Activated CD4-positive, alpha-beta T cell treated with anti-CD3 and anti-CD28 coated beads for 36 hours (primary cell): ENCODE measurements at regions of chr14 and their contacts with region 1.

Region 1: GRCh38 chr14:22664261-22664660 is 20.1 kb upstream of the OR6J1 start:
- DNase-seq: no peak
- ATAC-seq: no peak
- H3K4me3 Mint-ChIP-seq: no peak overlapping the region
- H3K27ac Mint-ChIP-seq: no peak overlapping the region
- H3K4me1 Mint-ChIP-seq: peaks cover 15% of the 10 kb centered on the region
- H3K27me3 Mint-ChIP-seq: no peaks in the 10 kb centered on the region

Region 2: GRCh38 chr14:21617614-21618013 is 1046.6 kb before region 1 on chr14:
- CTCF ChIA-PET with region 1: no interaction called
- POLR2A ChIA-PET with region 1: no interaction called
- intact Hi-C with region 1: no loop called
- DNase-seq: no peak
- ATAC-seq: no peak
- H3K4me3 Mint-ChIP-seq: no peak overlapping the region
- H3K27ac Mint-ChIP-seq: no peak overlapping the region
- H3K4me1 Mint-ChIP-seq: no peaks in the 10 kb centered on the region
- H3K27me3 Mint-ChIP-seq: peaks cover 12% of the 10 kb centered on the region

Region 3: DNA sequence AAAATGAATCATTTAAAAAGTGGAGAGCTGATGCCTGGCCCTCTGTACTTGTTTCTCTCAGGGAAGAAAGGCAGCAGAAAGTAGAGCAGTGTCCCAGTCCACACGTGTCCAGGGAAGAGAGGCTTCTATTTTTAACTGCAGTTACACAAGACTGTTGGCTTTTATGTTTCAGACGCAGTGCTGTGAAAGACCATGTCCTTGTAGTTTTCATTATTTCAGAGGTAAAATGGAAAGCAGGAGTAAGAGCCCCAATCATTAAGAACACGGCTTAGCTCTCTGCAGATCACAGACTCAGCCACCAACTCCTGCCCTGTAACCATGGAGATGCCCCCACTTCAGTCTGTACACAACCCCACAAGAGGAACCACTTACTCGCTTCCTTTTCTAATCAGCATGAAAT is 411.6 kb before region 1 on chr14:
- CTCF ChIA-PET with region 1: no interaction called
- POLR2A ChIA-PET with region 1: no interaction called
- intact Hi-C with region 1: no loop called
- DNase-seq: no peak
- ATAC-seq: no peak
- H3K4me3 Mint-ChIP-seq: no peak overlapping the region
- H3K27ac Mint-ChIP-seq: no peak overlapping the region
- H3K4me1 Mint-ChIP-seq: no peaks in the 10 kb centered on the region
- H3K27me3 Mint-ChIP-seq: no peaks in the 10 kb centered on the region

Region 4: GRCh38 chr14:22653012-22653621 is 11.1 kb before region 1 on chr14:
- CTCF ChIA-PET with region 1: interaction called, 12 read pairs
- POLR2A ChIA-PET with region 1: no interaction called
- intact Hi-C with region 1: no loop called
- DNase-seq: peak; percentile 75
- ATAC-seq: peak; percentile 80
- H3K4me3 Mint-ChIP-seq: no peak overlapping the region
- H3K27ac Mint-ChIP-seq: no peak overlapping the region
- H3K4me1 Mint-ChIP-seq: no peaks in the 10 kb centered on the region
- H3K27me3 Mint-ChIP-seq: no peaks in the 10 kb centered on the region